Lower leg skin (tissue), 4 donors: ENCODE measurements at regions of chr12 and their contacts with region 1.

Region 1: DNA sequence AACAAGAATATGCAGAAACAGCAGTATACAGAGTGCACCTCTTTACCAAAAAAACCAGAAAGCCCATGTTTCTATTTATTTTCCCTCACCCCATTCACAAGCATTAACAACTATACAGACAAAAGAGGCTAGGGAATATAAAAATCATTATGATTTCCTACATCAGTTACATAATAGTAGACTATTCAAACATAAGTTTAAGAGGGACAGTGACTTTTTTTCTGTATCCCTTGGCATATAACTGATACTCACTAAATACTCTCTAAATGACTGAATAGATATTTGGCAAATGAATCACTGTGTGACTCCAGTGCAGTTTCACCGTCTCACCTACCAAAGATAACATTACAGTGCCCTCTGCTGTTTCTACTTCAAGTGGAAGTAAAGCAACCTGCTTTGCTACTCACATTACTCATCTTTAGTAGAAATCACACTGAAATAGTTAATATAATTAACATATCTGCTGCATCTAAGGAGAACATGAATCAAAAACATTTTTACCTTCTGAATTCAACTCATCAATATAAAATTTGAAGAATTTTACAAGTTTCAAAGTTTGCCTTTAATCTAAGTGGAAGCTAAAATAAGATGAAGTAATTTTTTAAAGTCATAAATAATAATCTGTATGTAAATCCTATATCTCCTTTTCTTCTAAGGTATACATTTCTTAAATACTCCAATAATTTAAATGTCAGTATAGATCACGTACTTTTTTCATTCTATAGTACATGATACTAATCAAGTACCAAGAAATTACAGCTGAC is 103.8 kb downstream of the OSBPL8 start:
- DNase-seq: no peak
- H3K4me3 ChIP-seq: no peak overlapping the region
- CTCF ChIP-seq: no peak
- POLR2A ChIP-seq: no peak

Region 2: GRCh38 chr12:75526655-75527511 is 928.9 kb before region 1 on chr12:
- intact Hi-C with region 1: loop called (anchors 10 kb)
- DNase-seq: no peak
- H3K4me3 ChIP-seq: no peak overlapping the region
- CTCF ChIP-seq: no peak
- POLR2A ChIP-seq: no peak

Region 3: GRCh38 chr12:76398106-76398505 is 57.7 kb before region 1 on chr12:
- intact Hi-C with region 1: no loop called
- DNase-seq: no peak
- H3K4me3 ChIP-seq: no peak overlapping the region
- CTCF ChIP-seq: no peak
- POLR2A ChIP-seq: no peak